Posterior vena cava (tissue), 2 donors: ENCODE measurements at regions of chr16 and their contacts with region 1.

Region 1: DNA sequence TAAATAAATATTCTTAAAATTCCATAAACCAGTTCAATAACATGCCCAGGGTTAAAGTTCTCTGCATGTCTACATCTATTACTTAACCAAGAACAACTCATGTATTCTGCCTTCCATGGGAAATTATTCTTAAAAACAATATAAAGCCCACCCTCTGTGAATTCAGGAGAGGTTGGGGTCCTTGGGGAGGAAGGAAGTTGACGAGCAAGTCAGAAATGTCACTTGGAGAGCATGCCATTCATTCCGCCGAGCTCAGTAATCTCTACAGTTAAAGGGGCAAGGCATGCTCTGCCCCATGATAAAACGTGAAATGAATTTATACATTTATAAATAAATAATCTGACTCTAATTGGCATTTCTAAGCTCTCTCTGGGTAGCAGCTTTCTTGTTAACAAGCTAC is 405.1 kb downstream of the TOX3 start:
- DNase-seq: no peak

Region 2: GRCh38 chr16:51797669-51798259 is 344.1 kb before region 1 on chr16:
- intact Hi-C with region 1: no loop called
- DNase-seq: no peak

Region 3: GRCh38 chr16:52123844-52124241 is 18.0 kb before region 1 on chr16:
- intact Hi-C with region 1: loop called in 1 of 2 experiments (anchors 1 kb)
- DNase-seq: no peak

Region 4: GRCh38 chr16:52191531-52192134 is 49.8 kb after region 1 on chr16:
- intact Hi-C with region 1: no loop called
- DNase-seq: no peak